GM18951 (cell line): ENCODE measurements at regions of chr12 and their contacts with region 1.

Region 1: GRCh38 chr12:131311764-131312163 is 358.1 kb downstream of the ADGRD1 start:
- POLR2A ChIP-seq: no peak

Region 2: GRCh38 chr12:131353821-131354220 is 42.1 kb after region 1 on chr12:
- in situ Hi-C with region 1: no loop called
- POLR2A ChIP-seq: no peak

Region 3: DNA sequence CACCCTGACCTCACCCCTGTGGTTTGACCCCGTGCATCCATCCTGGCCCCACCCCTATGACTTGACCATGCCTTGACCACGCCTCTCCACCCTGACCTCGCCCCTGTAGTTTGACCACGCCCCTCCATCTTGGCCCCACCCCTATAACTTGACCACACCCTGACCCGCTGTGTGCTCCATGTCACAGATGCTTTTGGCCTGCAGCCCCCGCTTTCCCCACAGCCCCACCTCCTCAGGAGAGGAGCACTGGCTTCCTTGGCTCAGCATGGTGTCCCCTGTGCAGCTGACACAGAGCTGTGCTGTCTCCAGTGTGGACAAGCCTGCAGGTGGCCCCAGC is 129.3 kb after region 1 on chr12:
- in situ Hi-C with region 1: no loop called
- POLR2A ChIP-seq: no peak

Region 4: GRCh38 chr12:131642101-131642540 is 330.4 kb after region 1 on chr12:
- in situ Hi-C with region 1: loop called (anchors 5 kb)
- POLR2A ChIP-seq: no peak